ENCODE measurements at regions of chr2 and their contacts with region 1.

Region 1: GRCh38 chr2:113138428-113139322 is 11.3 kb downstream of the IL1RN start:
- DNase-seq: peak; percentile 74
- H3K4me3 ChIP-seq: no peak overlapping the region
- H3K27ac ChIP-seq: no peak overlapping the region
- H3K4me1 ChIP-seq: no peaks in the 10 kb centered on the region
- H3K27me3 ChIP-seq: no peaks in the 10 kb centered on the region
- CTCF ChIP-seq: peak; percentile 78

Region 2: DNA sequence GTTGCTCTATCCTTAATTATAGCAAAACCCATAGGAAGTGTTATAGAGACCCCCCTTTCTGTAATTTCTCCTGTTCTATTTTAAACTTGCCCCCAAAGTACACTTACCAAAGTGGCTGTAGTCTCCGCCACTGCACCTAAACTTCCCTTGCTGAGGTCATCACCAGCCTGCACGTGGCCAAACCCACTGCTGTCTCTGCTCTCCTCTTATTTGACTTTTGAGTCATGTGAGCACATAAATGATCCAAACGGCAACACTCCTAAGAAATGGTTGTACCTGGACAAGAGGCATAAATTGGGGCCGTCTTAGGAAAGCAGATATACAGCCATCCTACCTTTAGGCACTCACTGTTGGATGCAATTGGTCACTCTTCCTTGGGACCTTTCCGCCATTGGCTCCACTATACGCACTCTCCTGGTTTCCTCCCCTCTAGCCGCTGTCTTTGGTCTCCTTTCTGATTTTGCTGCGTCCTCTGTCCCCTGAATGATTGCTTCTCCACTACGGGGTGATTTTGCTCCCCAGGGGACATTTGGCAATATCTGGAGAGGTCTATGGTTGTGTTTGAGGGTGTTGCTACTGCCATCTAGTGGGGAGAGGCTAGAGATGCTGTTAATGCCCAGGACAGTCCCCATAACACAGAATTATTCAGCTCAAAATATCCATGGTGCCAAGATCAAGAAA is 180.1 kb before region 1 on chr2:
- CTCF ChIA-PET with region 1: interaction called, 18 read pairs
- POLR2A ChIA-PET with region 1: no interaction called
- intact Hi-C with region 1: no loop called
- DNase-seq: peak; percentile 86
- H3K4me3 ChIP-seq: no peak overlapping the region
- H3K27ac ChIP-seq: no peak overlapping the region
- H3K4me1 ChIP-seq: no peaks in the 10 kb centered on the region
- H3K27me3 ChIP-seq: no peaks in the 10 kb centered on the region
- CTCF ChIP-seq: peak; percentile 90

Region 3: GRCh38 chr2:113198790-113199612 is 60.3 kb after region 1 on chr2:
- CTCF ChIA-PET with region 1: interaction called, 11 read pairs
- POLR2A ChIA-PET with region 1: no interaction called
- intact Hi-C with region 1: loop called (anchors 5 kb)
- DNase-seq: peak; percentile 89
- H3K4me3 ChIP-seq: peak overlapping the region; percentile 89
- H3K27ac ChIP-seq: peak overlapping the region; percentile 52
- H3K4me1 ChIP-seq: peaks cover 13% of the 10 kb centered on the region
- H3K27me3 ChIP-seq: no peaks in the 10 kb centered on the region
- CTCF ChIP-seq: peak; percentile 84

Region 4: GRCh38 chr2:113248997-113249770 is 110.5 kb after region 1 on chr2:
- CTCF ChIA-PET with region 1: interaction called, 3 read pairs
- POLR2A ChIA-PET with region 1: no interaction called
- intact Hi-C with region 1: loop called (anchors 5 kb)
- DNase-seq: peak; percentile 80
- H3K4me3 ChIP-seq: no peak overlapping the region
- H3K27ac ChIP-seq: no peak overlapping the region
- H3K4me1 ChIP-seq: no peaks in the 10 kb centered on the region
- H3K27me3 ChIP-seq: no peaks in the 10 kb centered on the region
- CTCF ChIP-seq: peak; percentile 95

Region 5: GRCh38 chr2:113370478-113371091 is 231.9 kb after region 1 on chr2:
- CTCF ChIA-PET with region 1: interaction called, 5 read pairs
- POLR2A ChIA-PET with region 1: no interaction called
- intact Hi-C with region 1: loop called (anchors 1 kb)
- DNase-seq: peak; percentile 78
- H3K4me3 ChIP-seq: no peak overlapping the region
- H3K27ac ChIP-seq: no peak overlapping the region
- H3K4me1 ChIP-seq: no peaks in the 10 kb centered on the region
- H3K27me3 ChIP-seq: no peaks in the 10 kb centered on the region
- CTCF ChIP-seq: peak; percentile 64

Region 6: DNA sequence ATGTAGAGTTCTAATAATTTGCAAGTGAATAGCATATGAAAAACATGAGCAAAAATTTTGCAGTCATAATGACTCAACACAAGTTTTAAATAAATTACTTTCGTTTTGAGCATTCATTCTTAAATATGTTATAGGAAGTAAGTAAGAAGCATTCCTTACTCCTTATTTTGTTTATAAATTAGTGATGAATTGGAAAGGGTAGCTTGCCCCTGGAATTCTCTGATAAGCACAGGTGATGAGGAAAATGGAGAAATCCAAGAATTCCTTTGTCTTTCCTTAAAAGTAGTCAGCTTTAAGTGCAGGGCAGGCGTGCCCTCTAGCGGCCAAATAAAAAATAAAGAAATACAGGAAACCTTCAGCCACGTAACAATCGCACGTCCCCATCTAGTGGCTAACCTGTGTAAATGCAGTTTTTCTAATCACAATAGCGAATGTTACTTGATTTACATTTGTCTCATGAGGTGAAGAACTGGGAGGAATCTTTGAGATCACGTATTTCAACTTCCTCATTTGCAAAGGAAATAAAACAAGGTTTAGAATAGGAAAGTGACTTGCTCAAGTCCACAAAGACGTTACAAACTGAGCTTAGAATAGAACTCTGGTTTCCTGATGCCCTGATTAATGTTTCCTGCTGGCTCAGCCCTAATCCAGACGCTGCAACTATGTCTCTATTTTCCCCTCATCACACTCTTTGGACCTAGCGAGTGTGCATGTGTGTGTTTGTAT is 251.6 kb after region 1 on chr2:
- CTCF ChIA-PET with region 1: interaction called, 11 read pairs
- POLR2A ChIA-PET with region 1: no interaction called
- intact Hi-C with region 1: loop called (anchors 1 kb)
- DNase-seq: peak; percentile 87
- H3K4me3 ChIP-seq: no peak overlapping the region
- H3K27ac ChIP-seq: no peak overlapping the region
- H3K4me1 ChIP-seq: no peaks in the 10 kb centered on the region
- H3K27me3 ChIP-seq: no peaks in the 10 kb centered on the region
- CTCF ChIP-seq: peak; percentile 95

Measured in A673 (cell line).